GM12878 (cell line): ENCODE measurements at regions of chr5 and their contacts with region 1.

Region 1: GRCh38 chr5:173035904-173036707 is 20.0 kb upstream of the CREBRF start:
- DNase-seq: peak; percentile 88
- ATAC-seq: peak; percentile 85
- H3K4me3 ChIP-seq: peak overlapping the region; percentile 65
- H3K27ac ChIP-seq: peak overlapping the region; percentile 89
- H3K4me1 ChIP-seq: peaks cover 29% of the 10 kb centered on the region
- H3K27me3 ChIP-seq: no peaks in the 10 kb centered on the region
- CTCF ChIP-seq: no peak
- EP300 ChIP-seq: peak in 1 of 2 experiments; percentile 59; a peak in 2 of 4 replicates
- POLR2A ChIP-seq: peak; percentile 53
- RAD21 ChIP-seq: no peak

Region 2: GRCh38 chr5:172820046-172820767 is 215.9 kb before region 1 on chr5:
- CTCF ChIA-PET with region 1: no interaction called
- POLR2A ChIA-PET with region 1: no interaction called
- RAD21 ChIA-PET with region 1: no interaction called
- SMC1A ChIA-PET with region 1: no interaction called
- in situ Hi-C with region 1: no loop called
- intact Hi-C with region 1: no loop called
- DNase-seq: no peak
- ATAC-seq: no peak
- H3K4me3 ChIP-seq: no peak overlapping the region
- H3K27ac ChIP-seq: no peak overlapping the region
- H3K4me1 ChIP-seq: no peaks in the 10 kb centered on the region
- H3K27me3 ChIP-seq: no peaks in the 10 kb centered on the region
- CTCF ChIP-seq: no peak
- EP300 ChIP-seq: no peak
- POLR2A ChIP-seq: no peak
- RAD21 ChIP-seq: no peak

Region 3: GRCh38 chr5:172833686-172834414 is 202.3 kb before region 1 on chr5 and contains the start of gene ERGIC1:
- CTCF ChIA-PET with region 1: no interaction called
- POLR2A ChIA-PET with region 1: no interaction called
- RAD21 ChIA-PET with region 1: no interaction called
- SMC1A ChIA-PET with region 1: no interaction called
- in situ Hi-C with region 1: no loop called
- intact Hi-C with region 1: no loop called
- DNase-seq: no peak
- ATAC-seq: peak; percentile 86
- H3K4me3 ChIP-seq: peak within 1 kb of the TSS; percentile 97
- H3K27ac ChIP-seq: peak within 1 kb of the TSS; percentile 95
- H3K4me1 ChIP-seq: peaks cover 33% of the 10 kb centered on the region
- H3K27me3 ChIP-seq: no peaks in the 10 kb centered on the region
- CTCF ChIP-seq: no peak
- EP300 ChIP-seq: no peak
- POLR2A ChIP-seq: peak; percentile 72
- RAD21 ChIP-seq: no peak
- polyA plus RNA-seq, gene ERGIC1: 8.8 to 21.0 TPM

Region 4: DNA sequence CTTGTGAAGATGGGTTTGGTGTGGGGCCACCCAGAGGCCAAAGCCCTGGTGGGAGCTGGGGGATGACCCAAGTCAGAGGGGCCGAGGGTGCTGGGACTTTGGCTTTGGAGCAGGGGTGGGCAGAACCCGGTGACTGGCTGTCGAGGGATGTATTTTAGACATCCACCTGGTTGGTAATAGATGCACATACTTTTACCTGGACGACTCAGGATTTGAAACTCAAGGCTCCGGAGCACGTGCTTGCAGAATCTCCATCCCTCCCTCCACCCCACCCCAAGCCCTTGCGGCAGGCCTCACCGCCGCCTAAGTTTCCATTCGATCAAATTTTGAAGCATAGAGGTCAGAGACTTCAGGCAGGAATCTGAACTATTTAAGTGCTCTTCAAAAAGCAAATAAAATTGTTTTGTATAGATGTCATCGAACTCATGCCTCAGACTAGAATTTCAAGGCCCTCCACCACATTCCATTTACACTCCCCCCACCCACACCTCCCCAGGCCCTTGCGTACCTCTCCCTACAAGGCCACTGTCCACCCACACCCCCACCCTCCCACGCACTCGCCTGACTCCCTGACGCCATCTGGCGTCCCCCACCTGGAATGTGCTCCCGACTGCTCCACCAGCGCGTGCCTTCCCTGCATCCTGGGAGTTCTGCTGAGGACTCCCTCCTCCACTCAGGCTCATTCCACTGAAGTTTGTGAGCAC is 133.5 kb before region 1 on chr5:
- CTCF ChIA-PET with region 1: no interaction called
- POLR2A ChIA-PET with region 1: no interaction called
- RAD21 ChIA-PET with region 1: no interaction called
- SMC1A ChIA-PET with region 1: no interaction called
- in situ Hi-C with region 1: no loop called
- intact Hi-C with region 1: no loop called
- DNase-seq: no peak
- ATAC-seq: no peak
- H3K4me3 ChIP-seq: no peak overlapping the region
- H3K27ac ChIP-seq: no peak overlapping the region
- H3K4me1 ChIP-seq: peaks cover 18% of the 10 kb centered on the region
- H3K27me3 ChIP-seq: no peaks in the 10 kb centered on the region
- CTCF ChIP-seq: peak; percentile 10 to 48 (median 37); a peak in 3 of 6 replicates
- EP300 ChIP-seq: no peak
- POLR2A ChIP-seq: no peak
- RAD21 ChIP-seq: peak; percentile 20; the same call in 1 of the 2 replicates

Region 5: GRCh38 chr5:172994405-172994804 is 41.7 kb before region 1 on chr5:
- CTCF ChIA-PET with region 1: interaction called, 9 read pairs
- POLR2A ChIA-PET with region 1: interaction called, 4 read pairs
- RAD21 ChIA-PET with region 1: interaction called, 3 read pairs
- SMC1A ChIA-PET with region 1: interaction called, 12 read pairs
- in situ Hi-C with region 1: no loop called
- intact Hi-C with region 1: no loop called
- DNase-seq: no peak
- ATAC-seq: no peak; the same call in 2 of the 3 replicates
- H3K4me3 ChIP-seq: no peak overlapping the region
- H3K27ac ChIP-seq: no peak overlapping the region
- H3K4me1 ChIP-seq: peaks cover 3% of the 10 kb centered on the region; the same call in 1 of the 2 replicates
- H3K27me3 ChIP-seq: no peaks in the 10 kb centered on the region
- CTCF ChIP-seq: no peak
- EP300 ChIP-seq: no peak
- POLR2A ChIP-seq: no peak
- RAD21 ChIP-seq: no peak

Region 6: DNA sequence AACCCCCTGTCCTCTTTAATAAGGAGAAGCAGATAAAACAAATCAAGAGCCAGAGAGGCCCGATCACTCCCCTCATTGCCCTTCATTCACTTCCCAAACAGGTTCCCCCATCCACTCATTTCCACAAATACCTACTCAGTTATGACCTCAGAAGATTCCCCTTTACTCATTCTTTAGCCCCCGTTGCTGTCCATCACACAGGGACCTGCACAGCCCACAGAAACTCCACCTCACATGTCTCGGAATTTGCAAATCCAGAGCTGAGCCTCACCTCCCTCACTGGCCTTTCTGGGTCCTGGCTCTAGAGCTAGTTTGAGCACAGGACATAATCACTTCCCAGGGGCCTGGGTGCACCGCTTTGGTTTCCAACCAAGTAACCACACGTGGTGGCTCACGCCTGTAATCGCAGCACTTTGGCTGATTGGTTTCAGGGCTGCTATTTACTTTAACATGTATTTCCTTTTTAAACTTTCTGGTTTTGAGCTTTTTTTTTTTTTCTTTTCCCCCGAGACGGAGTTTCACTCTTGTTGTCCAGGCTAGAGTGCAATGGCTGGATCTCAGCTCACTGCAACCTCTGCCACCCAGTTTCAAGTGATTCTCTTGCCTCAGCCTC is 34.8 kb before region 1 on chr5:
- CTCF ChIA-PET with region 1: interaction called, 5 read pairs
- POLR2A ChIA-PET with region 1: interaction called, 9 read pairs
- RAD21 ChIA-PET with region 1: interaction called, 10 read pairs
- SMC1A ChIA-PET with region 1: interaction called, 20 read pairs
- in situ Hi-C with region 1: no loop called
- intact Hi-C with region 1: no loop called
- DNase-seq: peak; percentile 51
- ATAC-seq: peak; percentile 93
- H3K4me3 ChIP-seq: peak overlapping the region; percentile 28; the same call in 1 of the 2 replicates
- H3K27ac ChIP-seq: peak overlapping the region; percentile 20; the same call in 1 of the 2 replicates
- H3K4me1 ChIP-seq: peaks cover 19% of the 10 kb centered on the region
- H3K27me3 ChIP-seq: no peaks in the 10 kb centered on the region
- CTCF ChIP-seq: no peak
- EP300 ChIP-seq: no peak
- POLR2A ChIP-seq: no peak
- RAD21 ChIP-seq: no peak

Region 7: DNA sequence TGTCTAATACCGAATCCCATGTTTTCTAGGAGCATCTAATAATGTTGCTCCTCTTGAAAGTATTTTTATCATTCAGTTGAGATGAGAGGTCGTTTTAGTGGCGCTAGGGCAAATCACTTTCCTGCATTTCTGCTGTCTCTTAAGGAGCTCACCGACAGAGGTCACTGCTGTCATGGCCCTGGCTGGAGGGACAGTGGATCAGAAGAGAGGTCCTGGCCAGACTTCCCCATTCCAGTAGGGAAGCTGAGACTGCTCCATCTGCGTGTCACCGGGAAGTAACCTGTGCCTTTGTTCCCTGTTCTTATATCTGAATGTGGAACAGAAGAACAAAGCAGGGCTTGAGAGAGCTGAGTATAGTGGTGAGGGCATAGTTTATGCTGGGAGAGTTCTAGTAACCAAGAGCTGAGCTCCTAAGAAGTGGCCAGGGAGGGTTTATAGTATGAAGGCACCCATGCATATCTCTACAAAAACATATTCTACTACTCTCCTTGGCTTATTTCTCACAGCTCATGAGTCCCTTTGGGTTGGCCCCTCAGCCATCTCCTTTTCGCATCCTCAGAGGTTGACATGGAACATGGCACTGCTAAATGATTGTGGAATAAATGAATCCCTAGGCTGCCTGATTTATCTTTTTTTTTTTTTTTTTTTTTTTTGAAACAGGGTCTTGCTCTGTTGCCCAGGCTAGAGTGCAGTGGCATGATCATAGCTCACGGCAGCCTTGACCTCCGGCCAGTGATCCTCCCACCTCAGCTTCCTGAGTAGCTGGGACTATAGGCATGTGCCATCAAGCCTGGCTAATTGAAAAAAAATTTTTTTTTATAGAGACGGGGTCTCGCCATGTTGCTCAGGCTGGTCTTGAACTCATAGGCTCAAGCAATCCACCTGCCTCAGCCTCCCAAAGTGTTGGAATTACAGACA is 25.3 kb before region 1 on chr5:
- CTCF ChIA-PET with region 1: interaction called, 5 read pairs
- POLR2A ChIA-PET with region 1: interaction called, 14 read pairs
- RAD21 ChIA-PET with region 1: interaction called, 4 read pairs
- SMC1A ChIA-PET with region 1: interaction called, 7 read pairs
- in situ Hi-C with region 1: no loop called
- intact Hi-C with region 1: no loop called
- DNase-seq: no peak
- ATAC-seq: no peak; the same call in 2 of the 3 replicates
- H3K4me3 ChIP-seq: no peak overlapping the region
- H3K27ac ChIP-seq: peak overlapping the region; percentile 40
- H3K4me1 ChIP-seq: peaks cover 12% of the 10 kb centered on the region
- H3K27me3 ChIP-seq: no peaks in the 10 kb centered on the region
- CTCF ChIP-seq: peak in 2 of 3 experiments; percentile 15 to 18; a peak in 3 of 6 replicates
- EP300 ChIP-seq: no peak
- POLR2A ChIP-seq: no peak
- RAD21 ChIP-seq: peak; percentile 43; the same call in 1 of the 2 replicates

Region 8: GRCh38 chr5:173051746-173052145 is 15.6 kb after region 1 on chr5:
- CTCF ChIA-PET with region 1: interaction called, 7 read pairs
- POLR2A ChIA-PET with region 1: interaction called, 30 read pairs
- RAD21 ChIA-PET with region 1: interaction called, 39 read pairs
- SMC1A ChIA-PET with region 1: interaction called, 31 read pairs
- in situ Hi-C with region 1: no loop called
- intact Hi-C with region 1: loop called (anchors 1 kb)
- DNase-seq: no peak
- ATAC-seq: no peak
- H3K4me3 ChIP-seq: no peak overlapping the region
- H3K27ac ChIP-seq: no peak overlapping the region
- H3K4me1 ChIP-seq: peaks cover 25% of the 10 kb centered on the region
- H3K27me3 ChIP-seq: no peaks in the 10 kb centered on the region
- CTCF ChIP-seq: no peak
- EP300 ChIP-seq: no peak
- POLR2A ChIP-seq: no peak
- RAD21 ChIP-seq: no peak

Region 9: DNA sequence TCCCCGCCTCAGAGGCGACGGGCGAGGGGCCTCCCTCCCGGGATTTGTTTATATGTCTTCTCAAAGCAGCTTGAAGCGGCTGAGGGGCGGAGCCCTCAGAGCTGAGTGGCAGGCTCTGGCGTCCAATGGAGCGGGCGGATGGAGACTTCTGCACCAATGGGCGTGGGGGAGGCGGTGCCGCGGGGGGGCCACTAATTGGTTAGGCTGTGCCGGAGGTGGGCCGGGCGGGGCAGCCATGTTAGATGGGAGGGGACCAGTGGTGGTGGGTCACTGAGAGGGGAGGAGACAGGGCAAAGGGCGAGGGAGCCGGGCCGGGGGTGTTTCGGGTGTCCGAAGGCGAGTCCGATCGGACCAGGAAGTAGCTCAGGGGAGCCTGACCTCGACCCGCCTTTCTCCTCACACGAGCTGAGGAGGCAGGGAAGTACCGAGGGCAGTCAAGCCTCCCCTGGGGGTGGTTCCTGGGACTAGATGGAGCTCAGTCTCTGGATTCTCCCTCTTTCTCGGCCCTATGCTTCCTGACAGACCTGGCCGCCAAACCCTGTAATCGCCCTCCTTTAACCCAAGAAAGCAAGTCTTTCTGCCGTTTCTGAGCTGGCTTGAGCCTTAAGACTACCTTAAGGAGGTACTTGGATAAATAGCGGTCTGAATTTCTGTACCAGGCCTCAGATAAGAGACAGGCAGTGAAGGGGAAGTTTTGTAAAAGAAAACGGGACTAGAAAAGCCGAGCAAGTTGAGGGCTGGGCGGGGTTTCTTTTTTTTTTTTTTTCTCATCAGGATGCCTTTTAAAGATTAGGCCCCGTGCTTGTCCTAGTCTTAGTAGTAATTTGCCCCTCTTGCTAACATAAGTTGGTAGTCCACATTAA is 21.2 kb after region 1 on chr5:
- CTCF ChIA-PET with region 1: interaction called, 8 read pairs
- POLR2A ChIA-PET with region 1: interaction called, 30 read pairs
- RAD21 ChIA-PET with region 1: interaction called, 39 read pairs
- SMC1A ChIA-PET with region 1: interaction called, 31 read pairs
- in situ Hi-C with region 1: no loop called
- intact Hi-C with region 1: loop called (anchors 1 kb)
- DNase-seq: peak; percentile 85
- ATAC-seq: peak; percentile 92
- H3K4me3 ChIP-seq: peak overlapping the region; percentile 93
- H3K27ac ChIP-seq: peak overlapping the region; percentile 97
- H3K4me1 ChIP-seq: peaks cover 18% of the 10 kb centered on the region
- H3K27me3 ChIP-seq: no peaks in the 10 kb centered on the region
- CTCF ChIP-seq: peak in 1 of 3 experiments; percentile 0; a peak in 1 of 6 replicates
- EP300 ChIP-seq: no peak
- POLR2A ChIP-seq: peak; percentile 72
- RAD21 ChIP-seq: no peak

Region 10: GRCh38 chr5:173119719-173120118 is 83.6 kb after region 1 on chr5:
- CTCF ChIA-PET with region 1: no interaction called
- POLR2A ChIA-PET with region 1: no interaction called
- RAD21 ChIA-PET with region 1: no interaction called
- SMC1A ChIA-PET with region 1: no interaction called
- in situ Hi-C with region 1: no loop called
- intact Hi-C with region 1: no loop called
- DNase-seq: no peak
- ATAC-seq: no peak
- H3K4me3 ChIP-seq: no peak overlapping the region
- H3K27ac ChIP-seq: no peak overlapping the region
- H3K4me1 ChIP-seq: no peaks in the 10 kb centered on the region
- H3K27me3 ChIP-seq: no peaks in the 10 kb centered on the region
- CTCF ChIP-seq: no peak
- EP300 ChIP-seq: no peak
- POLR2A ChIP-seq: no peak
- RAD21 ChIP-seq: no peak

Region 11: GRCh38 chr5:173144200-173145176 is 108.4 kb after region 1 on chr5 and contains the start of gene BNIP1:
- CTCF ChIA-PET with region 1: interaction called, 11 read pairs
- POLR2A ChIA-PET with region 1: interaction called, 3 read pairs
- RAD21 ChIA-PET with region 1: interaction called, 7 read pairs
- SMC1A ChIA-PET with region 1: interaction called, 5 read pairs
- in situ Hi-C with region 1: no loop called
- intact Hi-C with region 1: no loop called
- DNase-seq: peak; percentile 84
- ATAC-seq: peak; percentile 96
- H3K4me3 ChIP-seq: peak within 1 kb of the TSS; percentile 94
- H3K27ac ChIP-seq: peak within 1 kb of the TSS; percentile 91
- H3K4me1 ChIP-seq: no peaks in the 10 kb centered on the region; the same call in 1 of the 2 replicates
- H3K27me3 ChIP-seq: no peaks in the 10 kb centered on the region
- CTCF ChIP-seq: peak; percentile 96 to 98 (median 98)
- EP300 ChIP-seq: no peak
- POLR2A ChIP-seq: peak; percentile 79
- RAD21 ChIP-seq: peak; percentile 60
- polyA plus RNA-seq, gene BNIP1: 56.3 to 62.5 TPM